MCF 10A (cell line): ENCODE measurements at regions of chr12 and their contacts with region 1.

Region 1: GRCh38 chr12:112382232-112382796 is at the start of gene HECTD4:
- DNase-seq: peak; percentile 89
- H3K4me3 Mint-ChIP-seq: peak within 1 kb of the TSS; percentile 88
- H3K27ac Mint-ChIP-seq: peak within 1 kb of the TSS; percentile 72
- H3K4me1 Mint-ChIP-seq: peaks cover 18% of the 10 kb centered on the region
- H3K27me3 Mint-ChIP-seq: no peaks in the 10 kb centered on the region
- CTCF ChIP-seq: no peak
- total RNA-seq, gene HECTD4: 35.2 and 46.7 TPM in 2 replicates

Region 2: DNA sequence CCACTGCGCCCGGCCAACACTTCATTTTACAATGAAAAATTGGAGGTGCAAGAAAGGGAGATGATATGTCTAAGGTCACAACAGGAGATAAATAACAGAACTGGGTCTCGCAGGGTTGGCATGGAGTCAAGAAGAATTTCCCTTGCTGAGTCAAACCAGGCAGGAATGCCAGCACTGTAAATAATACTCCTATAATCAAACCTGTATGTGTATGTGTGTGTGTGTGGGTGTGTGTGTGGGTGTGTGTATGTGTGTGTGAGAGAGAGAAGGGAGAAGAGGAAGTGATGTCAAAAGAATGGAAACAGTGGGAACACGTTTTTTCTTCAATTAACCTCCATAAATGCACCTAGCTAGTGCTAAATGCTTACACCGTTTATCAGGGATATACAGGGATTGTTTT is 439.8 kb before region 1 on chr12:
- CTCF ChIA-PET with region 1: no interaction called
- POLR2A ChIA-PET with region 1: no interaction called
- intact Hi-C with region 1: loop called (anchors 1 kb)
- DNase-seq: peak; percentile 50
- H3K4me3 Mint-ChIP-seq: no peak overlapping the region
- H3K27ac Mint-ChIP-seq: no peak overlapping the region
- H3K4me1 Mint-ChIP-seq: peaks cover 7% of the 10 kb centered on the region
- H3K27me3 Mint-ChIP-seq: no peaks in the 10 kb centered on the region
- CTCF ChIP-seq: no peak

Region 3: GRCh38 chr12:112198120-112198733 is 184.1 kb before region 1 on chr12:
- CTCF ChIA-PET with region 1: interaction called, 60 read pairs
- POLR2A ChIA-PET with region 1: interaction called, 16 read pairs
- intact Hi-C with region 1: loop called (anchors 1 kb)
- DNase-seq: peak; percentile 62
- H3K4me3 Mint-ChIP-seq: no peak overlapping the region
- H3K27ac Mint-ChIP-seq: no peak overlapping the region
- H3K4me1 Mint-ChIP-seq: no peaks in the 10 kb centered on the region
- H3K27me3 Mint-ChIP-seq: no peaks in the 10 kb centered on the region
- CTCF ChIP-seq: peak; percentile 68

Region 4: GRCh38 chr12:112252184-112252583 is 130.1 kb before region 1 on chr12:
- CTCF ChIA-PET with region 1: interaction called, 5 read pairs
- POLR2A ChIA-PET with region 1: no interaction called
- intact Hi-C with region 1: loop called (anchors 10 kb)
- DNase-seq: peak; percentile 30
- H3K4me3 Mint-ChIP-seq: no peak overlapping the region
- H3K27ac Mint-ChIP-seq: peak overlapping the region; percentile 0
- H3K4me1 Mint-ChIP-seq: peaks cover 4% of the 10 kb centered on the region
- H3K27me3 Mint-ChIP-seq: no peaks in the 10 kb centered on the region
- CTCF ChIP-seq: no peak

Region 5: GRCh38 chr12:112599871-112600270 is 217.6 kb after region 1 on chr12:
- CTCF ChIA-PET with region 1: no interaction called
- POLR2A ChIA-PET with region 1: no interaction called
- intact Hi-C with region 1: no loop called
- DNase-seq: peak; percentile 83
- H3K4me3 Mint-ChIP-seq: no peak overlapping the region
- H3K27ac Mint-ChIP-seq: peak overlapping the region; percentile 16
- H3K4me1 Mint-ChIP-seq: peaks cover 16% of the 10 kb centered on the region
- H3K27me3 Mint-ChIP-seq: peaks cover 22% of the 10 kb centered on the region
- CTCF ChIP-seq: no peak

Region 6: GRCh38 chr12:112937741-112938719 is 555.7 kb after region 1 on chr12 and contains the start of gene OAS3:
- CTCF ChIA-PET with region 1: no interaction called
- POLR2A ChIA-PET with region 1: no interaction called
- intact Hi-C with region 1: no loop called
- DNase-seq: peak; percentile 79
- H3K4me3 Mint-ChIP-seq: peak within 1 kb of the TSS; percentile 79
- H3K27ac Mint-ChIP-seq: peak within 1 kb of the TSS; percentile 62
- H3K4me1 Mint-ChIP-seq: peaks cover 33% of the 10 kb centered on the region
- H3K27me3 Mint-ChIP-seq: no peaks in the 10 kb centered on the region
- CTCF ChIP-seq: no peak
- total RNA-seq, gene OAS3: 5.7 and 6.5 TPM in 2 replicates